ENCODE measurements at regions of chr17 and their contacts with region 1.

Region 1: DNA sequence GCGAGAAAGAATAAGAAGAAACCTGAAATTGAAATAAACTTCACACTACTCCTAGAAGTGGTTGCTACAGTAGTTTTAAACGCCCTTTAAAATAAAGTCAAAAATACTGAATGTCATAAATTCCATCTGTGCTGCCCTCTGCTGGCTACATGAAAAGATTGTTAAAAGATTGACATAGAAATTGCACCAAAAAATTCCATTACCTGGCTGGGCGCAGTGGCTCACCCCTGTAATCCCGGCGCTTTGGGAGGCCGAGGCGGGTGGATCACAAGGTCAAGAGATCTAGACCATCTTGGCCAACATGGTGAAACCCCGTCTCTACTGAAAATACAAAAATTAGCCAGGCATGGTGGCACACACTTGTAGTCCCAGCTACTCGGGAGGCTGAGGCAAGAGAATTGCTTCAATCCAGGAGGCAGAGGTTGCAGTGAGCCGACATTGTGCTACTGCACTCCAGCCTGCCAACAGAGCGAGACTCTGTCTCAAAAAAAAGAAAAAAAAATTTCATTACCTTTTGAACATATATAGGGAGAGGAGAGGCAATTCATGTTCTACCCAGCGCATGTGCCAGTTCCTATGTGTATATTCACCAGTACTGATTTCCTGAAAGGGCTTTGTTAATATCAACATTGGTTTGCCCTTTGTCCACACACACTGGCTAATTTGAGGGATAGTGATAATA is 36.5 kb downstream of the CYTH1 start:
- DNase-seq: peak; percentile 68
- ATAC-seq: no peak
- H3K4me3 Mint-ChIP-seq: peak overlapping the region; percentile 19
- H3K27ac Mint-ChIP-seq: peak overlapping the region; percentile 99
- H3K4me1 Mint-ChIP-seq: peaks cover 91% of the 10 kb centered on the region
- H3K27me3 Mint-ChIP-seq: no peaks in the 10 kb centered on the region
- CTCF ChIP-seq: peak; percentile 86

Region 2: GRCh38 chr17:78723001-78723796 is 22.3 kb before region 1 on chr17:
- CTCF ChIA-PET with region 1: interaction called, 14 read pairs
- POLR2A ChIA-PET with region 1: interaction called, 13 read pairs
- intact Hi-C with region 1: no loop called
- DNase-seq: no peak
- ATAC-seq: no peak
- H3K4me3 Mint-ChIP-seq: no peak overlapping the region
- H3K27ac Mint-ChIP-seq: peak overlapping the region; percentile 82
- H3K4me1 Mint-ChIP-seq: peaks cover 95% of the 10 kb centered on the region
- H3K27me3 Mint-ChIP-seq: no peaks in the 10 kb centered on the region
- CTCF ChIP-seq: no peak

Region 3: GRCh38 chr17:78769196-78769773 is 23.7 kb after region 1 on chr17:
- CTCF ChIA-PET with region 1: interaction called, 10 read pairs
- POLR2A ChIA-PET with region 1: interaction called, 22 read pairs
- intact Hi-C with region 1: no loop called
- DNase-seq: peak; percentile 58
- ATAC-seq: peak; percentile 37
- H3K4me3 Mint-ChIP-seq: no peak overlapping the region
- H3K27ac Mint-ChIP-seq: no peak overlapping the region
- H3K4me1 Mint-ChIP-seq: peaks cover 41% of the 10 kb centered on the region
- H3K27me3 Mint-ChIP-seq: no peaks in the 10 kb centered on the region
- CTCF ChIP-seq: peak; percentile 51

Region 4: DNA sequence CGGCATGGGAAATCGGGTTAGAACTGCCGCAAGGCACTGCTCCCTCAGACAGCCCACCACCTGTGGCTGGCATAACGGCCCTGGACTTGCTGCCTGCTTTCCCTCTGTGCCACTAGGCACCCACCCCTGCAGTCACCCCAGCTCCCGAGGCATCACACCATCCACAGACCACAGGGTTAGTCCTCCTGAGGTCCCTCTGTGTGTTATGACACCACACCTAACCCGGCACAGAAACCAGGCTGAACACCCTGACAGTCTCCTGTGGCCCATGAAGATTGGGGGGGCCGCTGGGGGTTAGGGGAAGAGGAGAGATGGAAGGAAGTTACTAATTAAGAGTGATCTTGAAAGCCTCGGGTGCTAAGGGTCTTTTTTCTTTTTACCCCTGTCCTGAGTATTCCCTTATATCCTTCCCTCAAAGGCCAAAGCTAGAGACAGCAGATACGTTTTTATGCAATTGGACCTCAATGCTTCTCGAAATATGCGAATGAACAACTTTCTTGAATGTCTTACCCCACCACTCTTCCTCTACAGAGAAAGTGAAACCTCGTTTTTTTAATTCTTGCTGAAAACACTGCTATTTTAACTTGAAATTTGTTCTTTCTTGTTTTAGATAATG is 29.5 kb after region 1 on chr17:
- CTCF ChIA-PET with region 1: interaction called, 7 read pairs
- POLR2A ChIA-PET with region 1: interaction called, 22 read pairs
- intact Hi-C with region 1: loop called (anchors 2 kb)
- DNase-seq: peak; percentile 89
- ATAC-seq: peak; percentile 66
- H3K4me3 Mint-ChIP-seq: peak overlapping the region; percentile 87
- H3K27ac Mint-ChIP-seq: peak overlapping the region; percentile 97
- H3K4me1 Mint-ChIP-seq: peaks cover 53% of the 10 kb centered on the region
- H3K27me3 Mint-ChIP-seq: no peaks in the 10 kb centered on the region
- CTCF ChIP-seq: no peak

Region 5: GRCh38 chr17:78781104-78781947 is 35.8 kb after region 1 on chr17:
- CTCF ChIA-PET with region 1: interaction called, 7 read pairs
- POLR2A ChIA-PET with region 1: interaction called, 9 read pairs
- intact Hi-C with region 1: loop called (anchors 2 kb)
- DNase-seq: peak; percentile 50
- ATAC-seq: peak; percentile 7
- H3K4me3 Mint-ChIP-seq: peak overlapping the region; percentile 79
- H3K27ac Mint-ChIP-seq: peak overlapping the region; percentile 99
- H3K4me1 Mint-ChIP-seq: peaks cover 44% of the 10 kb centered on the region
- H3K27me3 Mint-ChIP-seq: no peaks in the 10 kb centered on the region
- CTCF ChIP-seq: no peak

Region 6: GRCh38 chr17:78822552-78822951 is 77.0 kb after region 1 on chr17:
- CTCF ChIA-PET with region 1: interaction called, 4 read pairs
- POLR2A ChIA-PET with region 1: no interaction called
- intact Hi-C with region 1: loop called (anchors 5 kb)
- DNase-seq: no peak
- ATAC-seq: no peak
- H3K4me3 Mint-ChIP-seq: no peak overlapping the region
- H3K27ac Mint-ChIP-seq: peak overlapping the region; percentile 44
- H3K4me1 Mint-ChIP-seq: peaks cover 52% of the 10 kb centered on the region
- H3K27me3 Mint-ChIP-seq: no peaks in the 10 kb centered on the region
- CTCF ChIP-seq: no peak

Measured in activated CD8-positive, alpha-beta T cell treated with anti-CD3 and anti-CD28 coated beads for 36 hours (primary cell).